A673 (cell line): ENCODE measurements at regions of chr1 and their contacts with region 1.

Region 1: DNA sequence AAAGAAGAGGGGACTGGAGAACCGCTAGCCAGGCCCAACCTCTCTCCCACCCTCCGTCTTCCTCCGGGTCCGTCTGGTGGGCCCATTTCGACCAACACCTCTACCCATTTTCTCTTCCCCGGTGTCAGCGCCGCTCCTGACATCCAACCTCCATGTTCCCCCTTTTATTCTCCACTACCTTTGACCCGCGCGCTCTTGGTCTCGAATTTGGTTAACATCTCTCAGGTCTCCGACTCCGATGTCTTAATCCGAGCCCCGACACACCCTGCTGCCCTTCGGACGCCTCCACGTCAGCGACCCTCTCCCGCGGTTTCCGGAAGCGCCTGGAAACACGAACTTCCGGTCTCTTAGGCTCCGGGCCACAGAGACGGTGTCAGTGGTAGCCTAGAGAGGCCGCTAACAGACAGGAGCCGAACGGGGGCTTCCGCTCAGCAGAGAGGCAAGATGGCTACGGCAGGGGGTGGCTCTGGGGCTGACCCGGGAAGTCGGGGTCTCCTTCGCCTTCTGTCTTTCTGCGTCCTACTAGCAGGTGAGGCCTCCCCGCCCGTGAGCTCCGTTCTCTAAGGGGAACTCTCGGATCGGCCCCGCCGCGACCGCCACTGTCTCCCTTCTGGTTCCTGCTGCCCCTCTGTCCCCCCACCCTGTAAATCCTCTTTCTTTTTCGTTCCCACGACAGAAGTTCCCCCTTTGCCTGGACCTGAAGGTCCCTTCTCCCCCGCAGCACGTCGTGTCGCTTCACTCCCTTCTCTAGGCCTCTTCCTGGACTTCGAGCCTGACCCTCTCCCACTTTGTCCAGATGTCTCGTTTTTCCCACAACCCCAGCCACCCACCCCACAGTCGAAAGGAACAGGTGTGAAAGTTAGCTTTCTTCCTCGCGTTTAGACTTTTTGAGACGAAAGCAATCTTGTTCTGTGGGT is at the starts of genes COPA and NCSTN:
- DNase-seq: peak; percentile 98
- H3K4me3 ChIP-seq: peak within 1 kb of the TSS; percentile 80
- H3K27ac ChIP-seq: peak within 1 kb of the TSS; percentile 92
- H3K4me1 ChIP-seq: peaks cover 7% of the 10 kb centered on the region
- H3K27me3 ChIP-seq: no peaks in the 10 kb centered on the region
- CTCF ChIP-seq: no peak
- total RNA-seq, gene COPA: 134 and 166 TPM in 2 replicates
- total RNA-seq, gene NCSTN: 58.0 and 64.6 TPM in 2 replicates

Region 2: GRCh38 chr1:158458263-158458662 is 1884.9 kb before region 1 on chr1:
- CTCF ChIA-PET with region 1: no interaction called
- POLR2A ChIA-PET with region 1: no interaction called
- intact Hi-C with region 1: no loop called
- DNase-seq: no peak
- H3K4me3 ChIP-seq: no peak overlapping the region
- H3K27ac ChIP-seq: no peak overlapping the region
- H3K4me1 ChIP-seq: no peaks in the 10 kb centered on the region
- H3K27me3 ChIP-seq: peaks cover 36% of the 10 kb centered on the region
- CTCF ChIP-seq: no peak

Region 3: DNA sequence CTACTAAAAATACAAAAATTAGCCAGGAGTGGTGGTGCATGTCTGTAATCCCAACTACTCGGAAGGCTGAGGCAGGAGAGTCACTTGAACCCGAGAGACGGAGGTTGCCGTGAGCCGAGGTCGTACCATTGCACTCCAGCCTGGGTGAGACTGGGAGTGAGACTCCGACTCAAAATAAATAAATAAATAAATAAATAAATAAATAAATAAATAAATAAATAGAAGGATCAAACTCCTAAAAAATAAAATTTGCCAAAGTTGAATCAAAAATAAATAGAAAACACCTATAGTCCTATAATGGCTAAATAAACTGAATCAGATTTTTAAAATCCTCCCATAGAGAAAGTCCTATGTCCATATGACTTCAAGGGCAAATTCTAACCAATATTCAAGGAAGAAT is 43.0 kb before region 1 on chr1:
- CTCF ChIA-PET with region 1: no interaction called
- POLR2A ChIA-PET with region 1: no interaction called
- intact Hi-C with region 1: loop called (anchors 5 kb)
- DNase-seq: no peak
- H3K4me3 ChIP-seq: no peak overlapping the region
- H3K27ac ChIP-seq: no peak overlapping the region
- H3K4me1 ChIP-seq: no peaks in the 10 kb centered on the region
- H3K27me3 ChIP-seq: no peaks in the 10 kb centered on the region
- CTCF ChIP-seq: no peak

Region 4: DNA sequence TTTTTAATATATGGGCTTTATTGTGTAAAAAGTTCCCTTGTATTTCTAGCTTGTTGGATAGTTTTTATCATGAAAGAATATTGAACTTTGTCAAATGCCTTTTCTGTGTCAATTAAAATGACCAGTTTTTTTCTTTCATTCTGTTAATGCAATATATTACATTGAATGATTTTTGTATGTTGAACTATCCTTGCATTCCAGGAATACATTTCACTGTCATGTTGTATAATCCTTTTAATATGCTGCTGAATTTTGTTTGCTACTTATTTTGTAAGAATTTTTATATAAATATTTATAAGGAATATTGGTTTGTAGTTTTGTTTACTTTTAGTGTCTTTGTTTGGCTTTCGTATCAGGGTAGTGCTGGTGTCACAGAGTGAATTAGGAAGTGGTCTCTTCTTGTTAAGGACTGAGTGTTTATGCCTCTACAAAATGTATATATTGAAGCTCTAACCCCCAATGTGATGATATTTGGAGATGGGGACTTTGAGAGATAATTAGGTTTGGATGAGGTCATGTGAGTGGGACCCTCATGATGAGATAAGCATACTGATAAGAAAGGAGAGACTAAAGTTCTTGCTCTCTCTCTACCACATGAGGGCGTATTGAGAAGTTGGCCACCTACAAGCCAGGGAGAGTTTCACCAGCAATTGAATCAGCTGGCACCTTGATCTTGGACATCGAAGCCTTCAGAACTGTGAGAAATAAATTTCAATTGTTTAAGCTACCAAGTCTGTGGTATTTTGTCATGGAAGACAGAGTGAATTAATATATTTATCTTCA is 191.8 kb after region 1 on chr1:
- CTCF ChIA-PET with region 1: no interaction called
- POLR2A ChIA-PET with region 1: no interaction called
- intact Hi-C with region 1: no loop called
- DNase-seq: no peak
- H3K4me3 ChIP-seq: no peak overlapping the region
- H3K27ac ChIP-seq: no peak overlapping the region
- H3K4me1 ChIP-seq: no peaks in the 10 kb centered on the region
- H3K27me3 ChIP-seq: no peaks in the 10 kb centered on the region
- CTCF ChIP-seq: peak; percentile 33; the same call in 1 of the 2 replicates

Region 5: DNA sequence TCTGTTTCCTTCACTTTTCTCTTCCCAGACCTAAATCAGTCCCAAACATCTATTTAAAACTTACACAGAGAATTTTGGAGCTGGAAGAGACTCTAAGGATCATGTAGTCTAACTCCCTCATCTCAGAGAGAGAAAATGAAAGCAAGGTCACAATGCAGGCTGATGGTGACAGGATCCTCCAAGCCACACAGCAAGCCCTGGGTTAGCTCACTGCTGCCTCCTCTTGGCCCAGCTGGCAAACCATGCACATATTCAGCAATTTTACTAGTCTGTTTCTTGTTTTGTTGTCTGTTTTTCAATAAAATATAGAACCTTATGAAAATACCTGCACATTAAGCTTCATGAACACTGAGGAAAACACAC is 425.1 kb after region 1 on chr1:
- CTCF ChIA-PET with region 1: interaction called, 12 read pairs
- POLR2A ChIA-PET with region 1: no interaction called
- intact Hi-C with region 1: no loop called
- DNase-seq: peak; percentile 48
- H3K4me3 ChIP-seq: no peak overlapping the region
- H3K27ac ChIP-seq: no peak overlapping the region
- H3K4me1 ChIP-seq: no peaks in the 10 kb centered on the region
- H3K27me3 ChIP-seq: peaks cover 18% of the 10 kb centered on the region
- CTCF ChIP-seq: peak; percentile 58